ENCODE measurements at regions of chr1 and their contacts with region 1.

Region 1: DNA sequence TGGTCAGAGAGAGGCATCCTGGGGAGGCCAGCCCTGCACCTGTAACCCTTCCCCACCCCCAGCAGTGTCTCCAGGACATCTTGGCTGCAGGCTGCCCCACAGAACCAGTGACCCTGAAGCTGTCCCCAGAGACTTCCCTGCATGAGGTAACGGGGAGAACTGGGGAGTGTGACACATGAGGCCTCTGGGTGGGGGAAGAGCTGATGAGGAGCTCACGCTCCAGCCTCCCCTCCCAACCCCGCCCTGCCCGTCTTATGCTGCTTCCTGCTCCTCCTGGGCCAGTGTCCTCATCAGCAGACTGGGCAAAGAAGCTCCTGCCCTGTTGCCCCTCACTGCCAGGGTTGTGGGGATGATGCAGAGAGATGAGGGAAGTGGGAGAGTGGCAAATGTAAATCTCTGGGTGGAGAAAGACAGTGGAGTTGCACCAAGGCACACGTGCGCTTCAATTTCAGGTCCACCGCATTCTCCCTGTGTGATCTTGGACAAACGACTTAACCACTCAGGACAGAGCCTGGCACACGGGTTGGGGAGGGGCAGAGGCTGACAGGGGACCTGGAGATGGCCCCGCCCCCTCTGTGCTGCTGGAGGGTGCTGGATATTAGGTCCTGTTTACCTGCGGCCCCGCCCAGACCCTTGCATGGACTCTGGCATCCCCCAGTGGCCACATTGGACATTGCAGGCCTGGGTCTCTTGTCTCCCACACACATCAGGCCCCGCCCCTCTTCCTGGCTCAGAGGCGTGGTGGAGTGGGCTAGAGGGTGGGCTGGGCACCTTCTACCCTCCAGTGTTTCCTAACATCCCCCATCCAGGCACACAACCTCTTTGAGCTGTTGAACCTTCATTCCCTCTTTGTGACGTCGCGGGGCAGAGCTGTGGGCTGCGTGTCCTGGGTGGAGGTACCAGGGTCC is 12.3 kb downstream of the CLCNKB start:
- DNase-seq: peak; percentile 96
- H3K4me3 ChIP-seq: no peak overlapping the region
- H3K27ac ChIP-seq: no peak overlapping the region
- H3K4me1 ChIP-seq: no peaks in the 10 kb centered on the region; a peak in 1 of 4 replicates
- H3K27me3 ChIP-seq: no peaks in the 10 kb centered on the region
- CTCF ChIP-seq: peak; percentile 87
- EP300 ChIP-seq: no peak
- RAD21 ChIP-seq: peak; percentile 85

Region 2: GRCh38 chr1:16009030-16009709 is 46.7 kb before region 1 on chr1:
- CTCF ChIA-PET with region 1: interaction called, 58 read pairs
- POLR2A ChIA-PET with region 1: no interaction called
- DNase-seq: peak; percentile 91
- H3K4me3 ChIP-seq: no peak overlapping the region; a peak in 1 of 4 replicates
- H3K27ac ChIP-seq: no peak overlapping the region
- H3K4me1 ChIP-seq: peaks cover 0 to 6% of the 10 kb centered on the region in 2 experiments; a peak in 1 of 4 replicates
- H3K27me3 ChIP-seq: no peaks in the 10 kb centered on the region
- CTCF ChIP-seq: peak; percentile 97
- EP300 ChIP-seq: no peak
- RAD21 ChIP-seq: peak; percentile 98

Region 3: GRCh38 chr1:16017461-16018303 is 38.2 kb before region 1 on chr1 and contains the start of gene HSPB7:
- CTCF ChIA-PET with region 1: interaction called, 14 read pairs
- POLR2A ChIA-PET with region 1: no interaction called
- DNase-seq: peak; percentile 76
- H3K4me3 ChIP-seq: no peak within 1 kb of the TSS
- H3K27ac ChIP-seq: peak within 1 kb of the TSS in 1 of 2 experiments; percentile 22; a peak in 1 of 4 replicates
- H3K4me1 ChIP-seq: peaks cover 10 to 57% of the 10 kb centered on the region in 2 experiments; a peak in 2 of 4 replicates
- H3K27me3 ChIP-seq: no peaks in the 10 kb centered on the region
- CTCF ChIP-seq: no peak
- EP300 ChIP-seq: no peak
- RAD21 ChIP-seq: no peak
- polyA plus RNA-seq, gene HSPB7: 0.05 and 0.23 TPM in 2 replicates

Region 4: GRCh38 chr1:16032388-16033103 is 23.3 kb before region 1 on chr1:
- CTCF ChIA-PET with region 1: interaction called, 17 read pairs
- POLR2A ChIA-PET with region 1: no interaction called
- DNase-seq: peak; percentile 97
- H3K4me3 ChIP-seq: no peak overlapping the region; a peak in 1 of 4 replicates
- H3K27ac ChIP-seq: no peak overlapping the region
- H3K4me1 ChIP-seq: peaks cover 0 to 4% of the 10 kb centered on the region in 2 experiments; a peak in 1 of 4 replicates
- H3K27me3 ChIP-seq: no peaks in the 10 kb centered on the region
- CTCF ChIP-seq: peak; percentile 78
- EP300 ChIP-seq: no peak
- RAD21 ChIP-seq: peak; percentile 92

Region 5: DNA sequence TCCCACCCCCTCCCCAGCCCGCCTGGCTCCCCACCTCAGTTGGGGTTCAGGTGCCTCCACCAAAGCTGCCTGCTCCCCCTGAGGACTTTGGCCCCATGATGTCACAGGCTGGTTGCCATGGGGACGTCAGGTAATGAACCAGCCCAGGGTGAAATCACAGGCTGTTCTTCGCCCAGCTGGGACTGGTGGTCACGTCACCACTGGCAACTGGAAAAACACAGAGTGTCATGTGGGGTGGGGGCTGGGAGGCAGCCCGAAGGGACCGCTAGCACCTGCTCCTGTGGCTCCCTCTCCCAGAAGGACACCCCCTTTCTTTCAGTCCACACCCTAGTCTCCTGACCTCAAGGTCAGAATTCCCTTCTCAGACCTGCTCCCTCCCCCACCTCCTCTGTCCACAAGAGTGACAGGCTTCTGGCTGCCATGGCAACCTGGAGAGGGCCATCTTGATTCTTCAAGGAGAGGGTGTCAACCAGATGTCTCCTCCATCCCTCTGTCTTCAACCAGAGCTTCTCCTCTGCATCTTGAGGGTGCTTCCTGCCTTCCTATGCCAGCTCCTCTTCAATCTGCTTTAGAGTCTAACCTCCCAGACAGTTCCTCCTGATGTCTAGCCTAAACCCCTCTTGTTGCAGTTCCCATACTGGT is 11.4 kb after region 1 on chr1:
- CTCF ChIA-PET with region 1: interaction called, 24 read pairs
- POLR2A ChIA-PET with region 1: no interaction called
- DNase-seq: peak; percentile 49
- H3K4me3 ChIP-seq: no peak overlapping the region
- H3K27ac ChIP-seq: no peak overlapping the region
- H3K4me1 ChIP-seq: peaks cover 0 to 4% of the 10 kb centered on the region in 2 experiments; a peak in 1 of 4 replicates
- H3K27me3 ChIP-seq: no peaks in the 10 kb centered on the region
- CTCF ChIP-seq: no peak
- EP300 ChIP-seq: no peak
- RAD21 ChIP-seq: no peak

Region 6: GRCh38 chr1:16073490-16074119 is 17.7 kb after region 1 on chr1 and contains the start of gene FAM131C:
- CTCF ChIA-PET with region 1: interaction called, 24 read pairs
- POLR2A ChIA-PET with region 1: no interaction called
- DNase-seq: peak; percentile 95
- H3K4me3 ChIP-seq: peak within 1 kb of the TSS; percentile 53 to 65
- H3K27ac ChIP-seq: no peak within 1 kb of the TSS
- H3K4me1 ChIP-seq: peaks cover 15 to 22% of the 10 kb centered on the region in 2 experiments; a peak in 3 of 4 replicates
- H3K27me3 ChIP-seq: no peaks in the 10 kb centered on the region
- CTCF ChIP-seq: peak; percentile 46
- EP300 ChIP-seq: no peak
- RAD21 ChIP-seq: no peak
- polyA plus RNA-seq, gene FAM131C: 0.97 and 1.6 TPM in 2 replicates

Region 7: GRCh38 chr1:16167331-16168143 is 111.7 kb after region 1 on chr1:
- CTCF ChIA-PET with region 1: no interaction called
- POLR2A ChIA-PET with region 1: no interaction called
- DNase-seq: peak; percentile 92
- H3K4me3 ChIP-seq: peak overlapping the region in 1 of 2 experiments; percentile 49; a peak in 2 of 4 replicates
- H3K27ac ChIP-seq: peak overlapping the region in 1 of 2 experiments; percentile 12; a peak in 1 of 4 replicates
- H3K4me1 ChIP-seq: peaks cover 0 to 8% of the 10 kb centered on the region in 2 experiments; a peak in 2 of 4 replicates
- H3K27me3 ChIP-seq: no peaks in the 10 kb centered on the region
- CTCF ChIP-seq: no peak
- EP300 ChIP-seq: no peak
- RAD21 ChIP-seq: no peak

Measured in SK-N-SH (cell line).